ENCODE measurements at regions of chr21 and their contacts with region 1.

Region 1: DNA sequence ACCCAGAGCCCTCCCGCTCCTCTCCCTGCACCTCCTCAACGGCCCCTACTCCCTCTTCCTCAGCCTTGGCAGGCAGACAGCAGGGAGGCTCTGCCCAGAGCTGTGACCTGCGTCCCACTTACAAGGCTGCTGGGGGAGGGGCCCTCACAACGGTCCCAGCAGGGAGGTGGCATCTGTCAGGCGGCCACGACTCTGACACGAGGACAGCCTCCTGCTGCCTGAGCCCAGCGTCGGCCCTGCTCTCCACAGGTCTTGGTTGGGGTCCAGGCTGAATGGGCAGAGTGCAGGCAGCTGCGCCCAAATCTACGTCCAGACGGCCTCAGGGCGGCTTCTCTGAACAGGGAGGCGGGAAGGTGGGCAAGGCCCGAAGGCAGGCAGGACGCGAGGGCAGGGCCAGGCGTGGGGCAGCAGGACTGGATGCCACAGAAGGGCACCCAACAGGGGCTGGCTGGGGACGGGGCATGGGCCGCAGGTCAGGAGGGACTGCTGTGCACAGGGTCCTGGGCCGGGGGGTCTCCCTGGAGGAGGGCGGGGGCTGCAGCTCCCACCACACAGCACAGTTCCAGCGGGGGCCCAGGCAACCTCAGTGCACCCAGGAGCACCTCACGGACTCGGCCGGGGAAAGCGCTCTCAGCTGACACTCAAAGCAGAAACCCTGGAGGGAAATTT is 7.4 kb downstream of the SLC19A1 start:
- DNase-seq: no peak
- ATAC-seq: peak; percentile 41

Region 2: GRCh38 chr21:45482899-45483821 is 51.6 kb before region 1 on chr21:
- intact Hi-C with region 1: loop called (anchors 10 kb)
- DNase-seq: no peak
- ATAC-seq: peak; percentile 44

Measured in sciatic nerve (tissue), 2 donors.